B cell (primary cell): ENCODE measurements at regions of chr21 and their contacts with region 1.

Region 1: DNA sequence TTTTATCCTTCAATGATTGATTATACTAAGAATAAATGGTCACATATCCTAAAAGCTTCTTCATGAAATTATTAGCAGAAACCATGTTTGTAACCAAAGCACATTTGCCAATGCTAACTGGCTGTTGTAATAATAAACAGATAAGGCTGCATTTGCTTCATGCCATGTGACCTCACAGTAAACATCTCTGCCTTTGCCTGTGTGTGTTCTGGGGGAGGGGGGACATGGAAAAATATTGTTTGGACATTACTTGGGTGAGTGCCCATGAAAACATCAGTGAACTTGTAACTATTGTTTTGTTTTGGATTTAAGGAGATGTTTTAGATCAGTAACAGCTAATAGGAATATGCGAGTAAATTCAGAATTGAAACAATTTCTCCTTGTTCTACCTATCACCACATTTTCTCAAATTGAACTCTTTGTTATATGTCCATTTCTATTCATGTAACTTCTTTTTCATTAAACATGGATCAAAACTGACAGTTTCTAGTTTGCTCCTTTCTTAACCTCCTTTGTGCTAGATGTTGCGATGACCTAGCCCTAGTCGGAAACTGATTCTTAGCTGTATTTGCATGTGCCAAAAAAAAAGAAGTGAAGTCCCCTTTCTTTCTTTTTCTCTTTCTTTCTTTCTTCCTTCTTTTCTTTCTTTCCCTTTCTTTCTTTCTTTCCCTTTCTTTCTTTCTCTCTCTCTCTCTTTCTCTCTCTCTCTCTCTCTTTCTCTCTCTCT is 45.1 kb downstream of the MAP3K7CL start:
- DNase-seq: no peak
- ATAC-seq: no peak
- H3K4me3 ChIP-seq: no peak overlapping the region
- H3K4me3 Mint-ChIP-seq: peak overlapping the region; percentile 74
- H3K27ac ChIP-seq: no peak overlapping the region
- H3K27ac Mint-ChIP-seq: peak overlapping the region; percentile 39
- H3K4me1 ChIP-seq: peaks cover 16 to 18% of the 10 kb centered on the region in 2 donors
- H3K4me1 Mint-ChIP-seq: peaks cover 22% of the 10 kb centered on the region
- H3K27me3 ChIP-seq: no peaks in the 10 kb centered on the region
- H3K27me3 Mint-ChIP-seq: no peaks in the 10 kb centered on the region
- CTCF ChIP-seq: no peak

Region 2: DNA sequence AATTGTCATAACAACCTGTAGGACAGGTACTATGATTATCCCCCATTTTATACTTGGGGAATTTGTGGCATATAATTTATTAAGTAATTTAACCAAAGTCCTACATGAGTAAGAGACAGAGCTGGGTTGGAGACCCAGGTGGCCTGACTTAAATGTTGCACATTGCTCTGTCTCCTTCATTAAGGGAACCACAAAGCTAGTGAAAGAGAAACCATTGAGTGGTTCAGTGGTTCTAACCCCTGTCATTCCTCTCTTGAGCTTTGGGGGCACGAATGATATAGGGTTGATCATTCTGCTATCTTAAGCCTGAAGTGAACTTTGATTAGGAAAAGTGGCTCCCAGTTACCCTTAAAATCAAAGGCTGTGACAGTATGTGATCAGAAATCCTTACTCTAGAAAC is 50.4 kb before region 1 on chr21:
- CTCF ChIA-PET with region 1: no interaction called
- POLR2A ChIA-PET with region 1: no interaction called
- intact Hi-C with region 1: loop called (anchors 10 kb)
- DNase-seq: peak; percentile 50
- ATAC-seq: peak; percentile 73
- H3K4me3 ChIP-seq: no peak overlapping the region
- H3K4me3 Mint-ChIP-seq: no peak overlapping the region
- H3K27ac ChIP-seq: peak overlapping the region in 1 of 2 donors; percentile 53
- H3K27ac Mint-ChIP-seq: no peak overlapping the region
- H3K4me1 ChIP-seq: peaks cover 12 to 33% of the 10 kb centered on the region in 2 donors
- H3K4me1 Mint-ChIP-seq: peaks cover 31% of the 10 kb centered on the region
- H3K27me3 ChIP-seq: no peaks in the 10 kb centered on the region
- H3K27me3 Mint-ChIP-seq: no peaks in the 10 kb centered on the region
- CTCF ChIP-seq: no peak

Region 3: GRCh38 chr21:29155118-29155932 is 20.2 kb before region 1 on chr21:
- CTCF ChIA-PET with region 1: no interaction called
- POLR2A ChIA-PET with region 1: no interaction called
- intact Hi-C with region 1: no loop called
- DNase-seq: no peak
- ATAC-seq: no peak
- H3K4me3 ChIP-seq: no peak overlapping the region
- H3K4me3 Mint-ChIP-seq: peak overlapping the region; percentile 48
- H3K27ac ChIP-seq: no peak overlapping the region
- H3K27ac Mint-ChIP-seq: no peak overlapping the region
- H3K4me1 ChIP-seq: no peaks in the 10 kb centered on the region
- H3K4me1 Mint-ChIP-seq: no peaks in the 10 kb centered on the region
- H3K27me3 ChIP-seq: peaks cover 0 to 3% (median 0%) of the 10 kb centered on the region in 4 experiments
- H3K27me3 Mint-ChIP-seq: no peaks in the 10 kb centered on the region
- CTCF ChIP-seq: no peak